ENCODE measurements at regions of chr5 and their contacts with region 1.

Region 1: GRCh38 chr5:110496276-110496675 is 230.2 kb downstream of the TMEM232 start:
- DNase-seq: no peak
- ATAC-seq: no peak
- H3K4me3 ChIP-seq: no peak overlapping the region
- H3K27ac ChIP-seq: no peak overlapping the region
- H3K4me1 ChIP-seq: no peaks in the 10 kb centered on the region
- H3K27me3 ChIP-seq: no peaks in the 10 kb centered on the region
- CTCF ChIP-seq: no peak

Region 2: GRCh38 chr5:110463106-110463505 is 33.2 kb before region 1 on chr5:
- intact Hi-C with region 1: loop called in 1 of 3 experiments (anchors 5 kb)
- DNase-seq: no peak
- ATAC-seq: no peak
- H3K4me3 ChIP-seq: no peak overlapping the region
- H3K27ac ChIP-seq: no peak overlapping the region
- H3K4me1 ChIP-seq: no peaks in the 10 kb centered on the region
- H3K27me3 ChIP-seq: no peaks in the 10 kb centered on the region
- CTCF ChIP-seq: no peak

Region 3: GRCh38 chr5:110630350-110630749 is 134.1 kb after region 1 on chr5:
- intact Hi-C with region 1: no loop called
- DNase-seq: no peak
- ATAC-seq: no peak
- H3K4me3 ChIP-seq: no peak overlapping the region
- H3K27ac ChIP-seq: no peak overlapping the region
- H3K4me1 ChIP-seq: no peaks in the 10 kb centered on the region
- H3K27me3 ChIP-seq: no peaks in the 10 kb centered on the region
- CTCF ChIP-seq: no peak